Panc1 (cell line): ENCODE measurements at regions of chr20 and their contacts with region 1.

Region 1: DNA sequence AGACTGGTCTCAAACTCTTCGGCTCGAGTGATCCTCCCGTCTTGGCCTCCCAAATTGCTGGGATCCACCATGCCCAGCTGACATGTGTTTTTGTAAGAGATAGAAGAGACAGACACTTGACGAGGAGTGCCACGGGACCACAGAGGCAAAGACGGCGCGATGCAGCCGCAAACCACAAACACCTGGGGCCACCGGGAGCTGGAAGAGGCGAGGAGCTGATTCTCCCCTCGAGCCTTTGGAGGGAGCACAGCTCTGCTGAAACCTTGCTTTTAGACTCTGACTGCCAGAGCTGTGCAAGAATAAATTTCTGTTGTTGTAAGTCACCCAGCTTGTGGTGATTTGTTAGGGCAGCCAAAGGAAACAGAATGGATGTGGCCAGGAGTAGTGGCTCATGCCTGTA is 46.9 kb downstream of the TFAP2C start:
- DNase-seq: no peak
- ATAC-seq: no peak
- H3K4me3 ChIP-seq: no peak overlapping the region
- H3K27ac ChIP-seq: no peak overlapping the region
- H3K4me1 ChIP-seq: no peaks in the 10 kb centered on the region
- H3K27me3 ChIP-seq: no peaks in the 10 kb centered on the region
- CTCF ChIP-seq: no peak

Region 2: DNA sequence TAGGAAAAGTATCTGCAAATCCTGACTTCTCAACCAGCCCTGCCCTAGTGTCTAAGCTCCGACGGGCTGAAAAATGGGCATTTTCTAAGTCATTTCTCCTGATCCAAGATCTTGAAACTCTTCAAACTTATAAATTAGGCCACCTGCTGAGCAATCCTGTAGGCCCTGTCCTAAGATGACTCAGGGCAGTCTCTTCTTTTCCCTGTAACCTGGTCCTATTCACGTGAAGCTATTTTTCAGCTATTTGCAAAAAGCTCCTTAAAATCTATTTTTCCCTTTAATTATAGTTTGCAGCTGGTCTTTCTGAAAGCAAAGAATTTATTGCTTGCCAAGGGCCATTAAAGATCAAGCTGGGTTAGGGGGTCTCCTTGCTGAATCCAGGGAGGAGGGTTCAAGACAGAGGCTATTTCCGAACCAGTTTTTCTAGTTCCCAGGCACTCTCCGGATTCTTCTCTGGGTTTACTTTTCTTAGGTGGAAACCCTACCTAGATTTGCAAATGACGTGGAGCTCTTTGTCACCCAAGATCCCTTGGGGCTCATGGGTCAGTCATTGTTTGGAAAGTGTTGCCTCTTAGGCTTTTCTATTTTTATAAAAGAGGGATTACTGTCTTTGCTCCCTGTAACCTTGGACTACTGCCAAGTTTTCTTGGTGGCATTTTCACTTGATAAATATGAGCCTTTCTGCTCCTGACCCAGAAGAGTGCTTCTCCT is 109.6 kb before region 1 on chr20:
- CTCF ChIA-PET with region 1: no interaction called
- POLR2A ChIA-PET with region 1: no interaction called
- in situ Hi-C with region 1: no loop called
- intact Hi-C with region 1: no loop called
- DNase-seq: no peak
- ATAC-seq: no peak
- H3K4me3 ChIP-seq: no peak overlapping the region
- H3K27ac ChIP-seq: no peak overlapping the region
- H3K4me1 ChIP-seq: no peaks in the 10 kb centered on the region
- H3K27me3 ChIP-seq: no peaks in the 10 kb centered on the region
- CTCF ChIP-seq: no peak

Region 3: DNA sequence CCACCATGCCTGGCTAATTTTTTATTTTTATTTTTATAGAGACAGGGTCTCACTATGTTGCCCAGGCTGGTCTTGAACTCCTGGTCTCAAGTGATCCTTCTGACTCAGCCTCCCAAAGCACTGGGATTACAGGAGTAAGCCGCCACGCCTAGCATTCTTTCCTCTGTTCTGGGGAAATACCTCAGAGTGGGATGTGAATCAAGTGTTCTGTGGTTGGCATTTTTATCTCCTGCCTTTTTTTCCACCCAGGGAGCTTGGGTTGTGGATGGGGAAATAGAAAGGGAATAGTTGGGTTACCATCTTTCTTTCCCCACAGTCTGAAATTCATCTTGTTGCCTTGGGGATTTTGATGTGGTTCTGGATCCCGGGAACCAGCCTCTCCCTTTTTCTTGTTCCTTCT is 22.8 kb before region 1 on chr20:
- CTCF ChIA-PET with region 1: no interaction called
- POLR2A ChIA-PET with region 1: interaction called, 11 read pairs
- in situ Hi-C with region 1: no loop called
- intact Hi-C with region 1: no loop called
- DNase-seq: no peak
- ATAC-seq: no peak
- H3K4me3 ChIP-seq: no peak overlapping the region
- H3K27ac ChIP-seq: no peak overlapping the region
- H3K4me1 ChIP-seq: no peaks in the 10 kb centered on the region
- H3K27me3 ChIP-seq: no peaks in the 10 kb centered on the region
- CTCF ChIP-seq: no peak

Region 4: GRCh38 chr20:56826705-56827631 is 151.0 kb after region 1 on chr20:
- CTCF ChIA-PET with region 1: no interaction called
- POLR2A ChIA-PET with region 1: no interaction called
- in situ Hi-C with region 1: no loop called
- intact Hi-C with region 1: no loop called
- DNase-seq: no peak
- ATAC-seq: no peak; the same call in 1 of the 2 replicates
- H3K4me3 ChIP-seq: no peak overlapping the region
- H3K27ac ChIP-seq: no peak overlapping the region
- H3K4me1 ChIP-seq: no peaks in the 10 kb centered on the region
- H3K27me3 ChIP-seq: no peaks in the 10 kb centered on the region
- CTCF ChIP-seq: no peak